ENCODE measurements at regions of chr4 and their contacts with region 1.

Region 1: GRCh38 chr4:184168406-184169019 is 49.2 kb downstream of the ENPP6 start:
- DNase-seq: peak; percentile 53
- ATAC-seq: peak; percentile 69
- H3K4me3 ChIP-seq: no peak overlapping the region
- H3K4me3 Mint-ChIP-seq: no peak overlapping the region
- H3K27ac ChIP-seq: no peak overlapping the region
- H3K27ac Mint-ChIP-seq: no peak overlapping the region
- H3K4me1 ChIP-seq: peaks cover 7 to 9% of the 10 kb centered on the region in 2 donors
- H3K4me1 Mint-ChIP-seq: peaks cover 6% of the 10 kb centered on the region
- H3K27me3 ChIP-seq: peaks cover 0 to 26% (median 9%) of the 10 kb centered on the region in 4 experiments
- H3K27me3 Mint-ChIP-seq: peaks cover 62% of the 10 kb centered on the region
- CTCF ChIP-seq: peak; percentile 78

Region 2: GRCh38 chr4:183840311-183840710 is 328.2 kb before region 1 on chr4:
- CTCF ChIA-PET with region 1: no interaction called
- POLR2A ChIA-PET with region 1: no interaction called
- intact Hi-C with region 1: loop called (anchors 1 kb)
- DNase-seq: peak; percentile 60
- ATAC-seq: peak; percentile 39
- H3K4me3 ChIP-seq: no peak overlapping the region
- H3K4me3 Mint-ChIP-seq: no peak overlapping the region
- H3K27ac ChIP-seq: no peak overlapping the region
- H3K27ac Mint-ChIP-seq: no peak overlapping the region
- H3K4me1 ChIP-seq: no peaks in the 10 kb centered on the region
- H3K4me1 Mint-ChIP-seq: no peaks in the 10 kb centered on the region
- H3K27me3 ChIP-seq: peaks cover 0 to 2% (median 0%) of the 10 kb centered on the region in 4 experiments
- H3K27me3 Mint-ChIP-seq: peaks cover 35% of the 10 kb centered on the region
- CTCF ChIP-seq: peak; percentile 86

Region 3: DNA sequence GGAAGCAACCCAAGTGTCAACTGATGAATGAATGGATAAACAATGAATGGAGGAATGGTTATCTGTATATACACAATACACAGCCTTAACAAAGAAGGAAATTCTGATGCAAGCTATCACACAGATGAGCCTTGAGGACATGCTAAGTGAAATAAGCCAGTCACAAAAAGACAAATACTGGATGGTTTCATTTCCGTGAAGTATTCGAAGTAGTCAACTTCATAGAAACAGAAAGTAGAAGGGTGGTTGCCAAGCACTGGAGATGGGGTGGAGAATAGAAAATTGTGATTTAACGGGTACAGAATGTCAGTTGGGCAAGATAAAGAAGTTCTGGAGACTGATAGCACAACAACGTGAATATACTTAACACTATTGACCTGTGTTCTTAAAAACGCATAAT is 537.2 kb after region 1 on chr4:
- CTCF ChIA-PET with region 1: no interaction called
- POLR2A ChIA-PET with region 1: no interaction called
- intact Hi-C with region 1: no loop called
- DNase-seq: no peak
- ATAC-seq: no peak
- H3K4me3 ChIP-seq: no peak overlapping the region
- H3K4me3 Mint-ChIP-seq: no peak overlapping the region
- H3K27ac ChIP-seq: no peak overlapping the region
- H3K27ac Mint-ChIP-seq: no peak overlapping the region
- H3K4me1 ChIP-seq: no peaks in the 10 kb centered on the region
- H3K4me1 Mint-ChIP-seq: no peaks in the 10 kb centered on the region
- H3K27me3 ChIP-seq: no peaks in the 10 kb centered on the region
- H3K27me3 Mint-ChIP-seq: no peaks in the 10 kb centered on the region
- CTCF ChIP-seq: no peak

Region 4: DNA sequence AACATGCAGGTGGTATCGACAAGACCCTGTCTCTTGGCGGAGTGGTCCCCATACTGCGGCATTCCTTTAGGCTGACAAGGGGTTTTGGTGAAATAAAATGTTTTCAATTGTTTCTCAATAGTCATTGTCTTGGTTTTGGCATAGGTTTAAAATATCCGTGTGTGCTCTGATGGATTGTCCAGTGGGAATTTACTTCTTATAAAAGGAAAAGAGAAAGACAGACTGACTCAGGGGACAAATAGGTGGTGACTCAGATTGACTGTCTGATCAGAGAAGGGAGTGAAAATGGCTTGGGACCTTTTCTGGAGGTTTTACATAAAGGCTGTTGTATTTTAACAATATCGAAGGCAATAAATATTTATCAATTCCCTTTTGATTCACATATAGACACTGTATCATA is 1513.7 kb after region 1 on chr4:
- CTCF ChIA-PET with region 1: no interaction called
- POLR2A ChIA-PET with region 1: no interaction called
- intact Hi-C with region 1: no loop called
- DNase-seq: no peak
- ATAC-seq: no peak
- H3K4me3 ChIP-seq: no peak overlapping the region
- H3K4me3 Mint-ChIP-seq: no peak overlapping the region
- H3K27ac ChIP-seq: no peak overlapping the region
- H3K27ac Mint-ChIP-seq: no peak overlapping the region
- H3K4me1 ChIP-seq: no peaks in the 10 kb centered on the region
- H3K4me1 Mint-ChIP-seq: no peaks in the 10 kb centered on the region
- H3K27me3 ChIP-seq: no peaks in the 10 kb centered on the region
- H3K27me3 Mint-ChIP-seq: peaks cover 16% of the 10 kb centered on the region
- CTCF ChIP-seq: no peak

Measured in B cell (primary cell).